CD4-positive, alpha-beta memory T cell (primary cell): ENCODE measurements at regions of chr10 and their contacts with region 1.

Region 1: DNA sequence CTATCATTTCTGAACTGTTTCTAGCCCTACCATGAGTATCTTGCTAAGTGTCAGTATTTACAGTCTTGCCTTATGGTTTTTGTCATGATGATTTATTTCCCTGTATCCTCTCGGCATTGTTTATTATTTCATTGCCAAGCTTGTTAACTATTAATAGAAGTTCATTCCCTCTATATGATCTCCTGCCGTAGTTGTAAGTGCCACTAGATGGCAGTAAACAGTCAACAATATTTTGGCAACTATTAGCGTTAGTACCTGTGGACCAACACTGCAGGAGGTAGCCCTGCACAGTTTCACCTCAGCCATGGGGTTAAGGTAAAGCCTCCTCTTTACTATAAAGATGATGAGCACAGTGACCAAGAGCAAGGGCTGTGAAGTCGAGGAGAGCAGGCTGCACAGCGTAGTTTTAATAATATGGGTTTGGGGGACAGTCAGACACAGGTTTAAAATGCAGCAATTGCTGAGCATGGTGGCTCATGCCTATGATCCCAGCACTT is 26.1 kb upstream of the CCNJ start:
- DNase-seq: peak; percentile 41 to 53 (median 46)
- H3K4me3 ChIP-seq: no peak overlapping the region
- H3K4me3 Mint-ChIP-seq: no peak overlapping the region
- H3K27ac ChIP-seq: no peak overlapping the region
- H3K27ac Mint-ChIP-seq: no peak overlapping the region
- H3K4me1 ChIP-seq: no peaks in the 10 kb centered on the region
- H3K4me1 Mint-ChIP-seq: peaks cover 0 to 4% (median 3%) of the 10 kb centered on the region in 4 donors
- H3K27me3 ChIP-seq: no peaks in the 10 kb centered on the region
- H3K27me3 Mint-ChIP-seq: peaks cover 4 to 5% of the 10 kb centered on the region in 2 donors

Region 2: GRCh38 chr10:96043033-96043932 is 26.0 kb after region 1 on chr10 and contains the start of gene CCNJ:
- CTCF ChIA-PET with region 1: interaction called, 3 read pairs
- POLR2A ChIA-PET with region 1: no interaction called
- intact Hi-C with region 1: loop called (anchors 2 kb)
- DNase-seq: peak; percentile 77 to 87 (median 85)
- H3K4me3 ChIP-seq: peak within 1 kb of the TSS; percentile 60 to 69
- H3K4me3 Mint-ChIP-seq: peak within 1 kb of the TSS; percentile 91 to 96 (median 92)
- H3K27ac ChIP-seq: peak within 1 kb of the TSS; percentile 64
- H3K27ac Mint-ChIP-seq: peak within 1 kb of the TSS; percentile 54 to 95 (median 92)
- H3K4me1 ChIP-seq: peaks cover 19% of the 10 kb centered on the region
- H3K4me1 Mint-ChIP-seq: peaks cover 26 to 48% (median 36%) of the 10 kb centered on the region in 4 donors
- H3K27me3 ChIP-seq: no peaks in the 10 kb centered on the region
- H3K27me3 Mint-ChIP-seq: peaks cover 3 to 6% of the 10 kb centered on the region in 2 donors
- total RNA-seq, gene CCNJ: 7.1 TPM

Region 3: DNA sequence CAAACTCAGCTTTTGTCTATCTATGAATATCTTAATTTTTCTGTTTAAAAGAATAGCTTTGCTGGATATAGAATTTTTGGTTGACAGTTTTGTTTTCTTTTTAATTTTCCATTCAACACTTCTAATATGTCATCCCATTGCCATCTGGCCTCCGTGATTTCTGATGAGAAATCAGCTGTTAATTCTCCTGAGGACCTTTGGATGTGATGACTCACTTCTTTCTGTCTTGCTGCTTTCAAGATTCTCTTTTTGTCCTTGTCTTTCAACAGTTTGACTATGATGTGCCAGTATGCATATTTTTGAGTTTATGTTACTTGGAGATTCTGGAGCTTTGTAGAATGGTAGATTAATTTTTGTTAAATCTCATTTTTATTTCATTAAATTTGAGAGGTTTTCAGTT is 151.3 kb after region 1 on chr10:
- CTCF ChIA-PET with region 1: no interaction called
- POLR2A ChIA-PET with region 1: no interaction called
- intact Hi-C with region 1: no loop called
- DNase-seq: no peak
- H3K4me3 ChIP-seq: no peak overlapping the region
- H3K4me3 Mint-ChIP-seq: no peak overlapping the region
- H3K27ac ChIP-seq: no peak overlapping the region
- H3K27ac Mint-ChIP-seq: no peak overlapping the region
- H3K4me1 ChIP-seq: no peaks in the 10 kb centered on the region
- H3K4me1 Mint-ChIP-seq: no peaks in the 10 kb centered on the region
- H3K27me3 ChIP-seq: no peaks in the 10 kb centered on the region
- H3K27me3 Mint-ChIP-seq: no peaks in the 10 kb centered on the region

Region 4: GRCh38 chr10:96229568-96230030 is 212.4 kb after region 1 on chr10:
- CTCF ChIA-PET with region 1: interaction called, 17 read pairs
- POLR2A ChIA-PET with region 1: interaction called, 3 read pairs
- intact Hi-C with region 1: no loop called
- DNase-seq: peak; percentile 51 to 60 (median 53)
- H3K4me3 ChIP-seq: no peak overlapping the region
- H3K4me3 Mint-ChIP-seq: no peak overlapping the region
- H3K27ac ChIP-seq: no peak overlapping the region
- H3K27ac Mint-ChIP-seq: peak overlapping the region in 4 of 7 donors; percentile 3 to 88 (median 60)
- H3K4me1 ChIP-seq: no peaks in the 10 kb centered on the region
- H3K4me1 Mint-ChIP-seq: peaks cover 0 to 4% (median 2%) of the 10 kb centered on the region in 4 donors
- H3K27me3 ChIP-seq: no peaks in the 10 kb centered on the region
- H3K27me3 Mint-ChIP-seq: peaks cover 2 to 4% of the 10 kb centered on the region in 2 donors

Region 5: GRCh38 chr10:96319754-96320474 is 302.7 kb after region 1 on chr10:
- CTCF ChIA-PET with region 1: interaction called, 17 read pairs
- POLR2A ChIA-PET with region 1: no interaction called
- intact Hi-C with region 1: no loop called
- DNase-seq: no peak
- H3K4me3 ChIP-seq: no peak overlapping the region
- H3K4me3 Mint-ChIP-seq: no peak overlapping the region
- H3K27ac ChIP-seq: no peak overlapping the region
- H3K27ac Mint-ChIP-seq: no peak overlapping the region
- H3K4me1 ChIP-seq: no peaks in the 10 kb centered on the region
- H3K4me1 Mint-ChIP-seq: peaks cover 0 to 1% (median 0%) of the 10 kb centered on the region in 4 donors
- H3K27me3 ChIP-seq: no peaks in the 10 kb centered on the region
- H3K27me3 Mint-ChIP-seq: peaks cover 17 to 25% of the 10 kb centered on the region in 2 donors

Region 6: GRCh38 chr10:96358851-96359540 is 341.8 kb after region 1 on chr10 and contains the start of gene OPALIN:
- CTCF ChIA-PET with region 1: no interaction called
- POLR2A ChIA-PET with region 1: no interaction called
- intact Hi-C with region 1: no loop called
- DNase-seq: no peak
- H3K4me3 ChIP-seq: no peak within 1 kb of the TSS
- H3K4me3 Mint-ChIP-seq: no peak within 1 kb of the TSS
- H3K27ac ChIP-seq: no peak within 1 kb of the TSS
- H3K27ac Mint-ChIP-seq: peak within 1 kb of the TSS in 2 of 7 donors; percentile 28 to 59
- H3K4me1 ChIP-seq: no peaks in the 10 kb centered on the region
- H3K4me1 Mint-ChIP-seq: no peaks in the 10 kb centered on the region
- H3K27me3 ChIP-seq: no peaks in the 10 kb centered on the region
- H3K27me3 Mint-ChIP-seq: peaks cover 10 to 24% of the 10 kb centered on the region in 2 donors
- total RNA-seq, gene OPALIN: not detected